B cell (primary cell): ENCODE measurements at regions of chr11 and their contacts with region 1.

Region 1: GRCh38 chr11:65497141-65498041 is 1.5 kb upstream of the MALAT1 start:
- DNase-seq: peak; percentile 99
- ATAC-seq: peak; percentile 76
- H3K4me3 ChIP-seq: peak overlapping the region; percentile 76 to 100 (median 93)
- H3K4me3 Mint-ChIP-seq: no peak overlapping the region
- H3K27ac ChIP-seq: peak overlapping the region; percentile 99 to 100
- H3K27ac Mint-ChIP-seq: no peak overlapping the region
- H3K4me1 ChIP-seq: peaks cover 31 to 53% of the 10 kb centered on the region in 2 donors
- H3K4me1 Mint-ChIP-seq: peaks cover 43% of the 10 kb centered on the region
- H3K27me3 ChIP-seq: no peaks in the 10 kb centered on the region
- H3K27me3 Mint-ChIP-seq: no peaks in the 10 kb centered on the region
- CTCF ChIP-seq: no peak

Region 2: DNA sequence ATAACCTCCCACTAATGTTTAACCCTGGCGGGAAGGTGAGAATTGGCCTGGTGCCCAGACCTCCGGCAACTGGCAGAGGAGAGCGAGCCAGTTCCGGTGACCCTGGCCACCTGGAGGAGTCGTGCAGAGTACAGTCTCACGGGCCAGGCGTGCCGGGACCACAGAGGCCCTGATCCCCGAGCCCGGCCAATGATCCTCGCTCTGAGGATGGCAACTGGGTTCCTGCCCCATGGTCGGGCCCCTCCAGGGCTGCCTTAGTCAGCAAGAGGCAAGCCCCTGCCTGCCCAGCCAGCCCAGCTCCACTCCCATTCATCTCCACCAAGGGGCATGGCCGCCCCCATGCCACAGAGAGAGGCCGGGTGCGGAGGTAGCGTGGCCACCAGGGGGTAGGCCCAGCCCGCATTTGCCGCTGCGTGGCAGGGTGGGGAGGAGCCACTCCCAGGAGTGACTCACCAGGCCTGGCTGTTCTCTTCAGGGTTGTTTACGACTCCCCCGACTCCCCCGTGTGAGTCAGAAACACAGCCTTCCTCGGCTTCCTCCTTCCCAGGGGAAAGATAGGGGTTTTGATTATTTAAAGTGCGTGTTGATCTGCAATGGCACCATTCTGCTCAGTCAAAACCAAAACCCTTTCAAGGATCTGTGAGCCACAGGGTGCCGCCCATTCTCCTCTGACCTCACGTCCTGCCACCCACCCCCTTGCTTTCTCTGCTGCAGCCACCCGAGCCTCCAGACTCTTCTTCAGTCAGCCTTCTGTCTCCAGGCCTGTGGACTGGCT is 115.2 kb before region 1 on chr11 and contains the start of gene SLC25A45:
- CTCF ChIA-PET with region 1: interaction called, 252 read pairs
- POLR2A ChIA-PET with region 1: interaction called, 49 read pairs
- intact Hi-C with region 1: loop called (anchors 1 kb)
- DNase-seq: peak; percentile 93
- ATAC-seq: peak; percentile 83
- H3K4me3 ChIP-seq: peak within 1 kb of the TSS; percentile 44 to 81 (median 61)
- H3K4me3 Mint-ChIP-seq: peak within 1 kb of the TSS; percentile 92
- H3K27ac ChIP-seq: peak within 1 kb of the TSS; percentile 91
- H3K27ac Mint-ChIP-seq: peak within 1 kb of the TSS; percentile 98
- H3K4me1 ChIP-seq: peaks cover 35 to 71% of the 10 kb centered on the region in 2 donors
- H3K4me1 Mint-ChIP-seq: peaks cover 63% of the 10 kb centered on the region
- H3K27me3 ChIP-seq: no peaks in the 10 kb centered on the region
- H3K27me3 Mint-ChIP-seq: no peaks in the 10 kb centered on the region
- CTCF ChIP-seq: peak; percentile 85
- total RNA-seq, gene SLC25A45: 16.4 and 18.2 TPM in 2 replicates

Region 3: GRCh38 chr11:65425105-65425970 is 72.1 kb before region 1 on chr11:
- CTCF ChIA-PET with region 1: interaction called, 541 read pairs
- POLR2A ChIA-PET with region 1: interaction called, 1,159 read pairs
- intact Hi-C with region 1: loop called (anchors 1 kb)
- DNase-seq: peak; percentile 94
- ATAC-seq: peak; percentile 36
- H3K4me3 ChIP-seq: peak overlapping the region; percentile 63 to 98 (median 75)
- H3K4me3 Mint-ChIP-seq: peak overlapping the region; percentile 92
- H3K27ac ChIP-seq: peak overlapping the region; percentile 91 to 97
- H3K27ac Mint-ChIP-seq: peak overlapping the region; percentile 100
- H3K4me1 ChIP-seq: peaks cover 79 to 88% of the 10 kb centered on the region in 2 donors
- H3K4me1 Mint-ChIP-seq: peaks cover 75% of the 10 kb centered on the region
- H3K27me3 ChIP-seq: no peaks in the 10 kb centered on the region
- H3K27me3 Mint-ChIP-seq: no peaks in the 10 kb centered on the region
- CTCF ChIP-seq: peak; percentile 37

Region 4: GRCh38 chr11:65440831-65441499 is 56.4 kb before region 1 on chr11:
- CTCF ChIA-PET with region 1: interaction called, 6 read pairs
- POLR2A ChIA-PET with region 1: interaction called, 102 read pairs
- intact Hi-C with region 1: no loop called
- DNase-seq: peak; percentile 81
- ATAC-seq: peak; percentile 40
- H3K4me3 ChIP-seq: peak overlapping the region in 3 of 5 experiments; percentile 24 to 48 (median 29)
- H3K4me3 Mint-ChIP-seq: peak overlapping the region; percentile 89
- H3K27ac ChIP-seq: peak overlapping the region; percentile 59 to 79
- H3K27ac Mint-ChIP-seq: peak overlapping the region; percentile 98
- H3K4me1 ChIP-seq: peaks cover 63 to 69% of the 10 kb centered on the region in 2 donors
- H3K4me1 Mint-ChIP-seq: peaks cover 62% of the 10 kb centered on the region
- H3K27me3 ChIP-seq: no peaks in the 10 kb centered on the region
- H3K27me3 Mint-ChIP-seq: no peaks in the 10 kb centered on the region
- CTCF ChIP-seq: no peak

Region 5: DNA sequence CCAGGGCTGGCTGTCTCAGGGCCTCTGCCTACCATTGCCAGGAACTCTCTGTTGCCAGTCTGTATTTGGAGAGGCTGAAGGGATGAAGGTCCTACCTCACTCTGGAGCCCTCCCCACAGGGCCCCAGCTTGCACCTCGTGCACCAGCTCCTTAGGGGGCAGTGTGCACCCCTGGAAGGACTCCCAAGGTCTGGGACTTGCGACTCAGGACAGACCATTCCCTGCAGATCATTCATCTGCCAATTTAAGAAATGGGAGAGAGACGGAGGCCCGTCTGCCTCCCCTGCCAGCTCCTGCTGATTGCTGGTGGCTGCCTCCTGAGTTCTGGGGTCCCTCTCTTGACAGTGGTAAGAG is 26.0 kb before region 1 on chr11:
- CTCF ChIA-PET with region 1: interaction called, 39 read pairs
- POLR2A ChIA-PET with region 1: interaction called, 366 read pairs
- intact Hi-C with region 1: loop called (anchors 1 kb)
- DNase-seq: peak; percentile 47
- ATAC-seq: no peak
- H3K4me3 ChIP-seq: peak overlapping the region in 1 of 5 experiments; percentile 26
- H3K4me3 Mint-ChIP-seq: peak overlapping the region; percentile 19
- H3K27ac ChIP-seq: peak overlapping the region; percentile 56 to 77
- H3K27ac Mint-ChIP-seq: peak overlapping the region; percentile 97
- H3K4me1 ChIP-seq: peaks cover 16 to 30% of the 10 kb centered on the region in 2 donors
- H3K4me1 Mint-ChIP-seq: peaks cover 27% of the 10 kb centered on the region
- H3K27me3 ChIP-seq: no peaks in the 10 kb centered on the region
- H3K27me3 Mint-ChIP-seq: no peaks in the 10 kb centered on the region
- CTCF ChIP-seq: no peak

Region 6: GRCh38 chr11:65588199-65589054 is 91.0 kb after region 1 on chr11:
- CTCF ChIA-PET with region 1: no interaction called
- POLR2A ChIA-PET with region 1: interaction called, 15 read pairs
- intact Hi-C with region 1: no loop called
- DNase-seq: peak; percentile 87
- ATAC-seq: peak; percentile 76
- H3K4me3 ChIP-seq: peak overlapping the region in 3 of 5 experiments; percentile 9 to 26 (median 13)
- H3K4me3 Mint-ChIP-seq: peak overlapping the region; percentile 75
- H3K27ac ChIP-seq: peak overlapping the region; percentile 82 to 92
- H3K27ac Mint-ChIP-seq: peak overlapping the region; percentile 93
- H3K4me1 ChIP-seq: peaks cover 27 to 41% of the 10 kb centered on the region in 2 donors
- H3K4me1 Mint-ChIP-seq: peaks cover 38% of the 10 kb centered on the region
- H3K27me3 ChIP-seq: no peaks in the 10 kb centered on the region
- H3K27me3 Mint-ChIP-seq: no peaks in the 10 kb centered on the region
- CTCF ChIP-seq: peak; percentile 83